ENCODE measurements at regions of chr10 and their contacts with region 1.

Region 1: DNA sequence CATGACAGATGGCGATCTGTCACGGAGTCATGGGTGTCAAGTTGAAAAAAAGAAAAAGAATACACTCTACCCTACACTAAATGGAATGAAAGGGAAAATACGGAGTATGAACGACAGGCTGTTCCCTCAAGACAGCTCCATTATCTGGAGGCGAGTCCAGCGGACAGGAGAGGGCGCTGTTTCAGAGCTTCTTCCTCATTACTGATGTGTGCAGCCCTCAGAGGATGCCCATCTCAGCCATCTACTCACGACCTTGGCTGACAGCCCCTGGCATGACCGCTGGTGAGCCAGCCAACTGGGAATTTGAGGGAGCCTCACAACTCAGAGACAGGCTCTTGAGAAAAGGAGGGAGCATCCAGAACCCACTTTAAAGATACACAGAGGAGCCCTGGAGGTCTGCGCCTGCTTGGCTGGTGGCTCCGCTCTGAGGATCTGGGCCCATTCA is 49.6 kb upstream of the SMNDC1 start:
- DNase-seq: peak; percentile 58
- CTCF ChIP-seq: peak; percentile 85

Region 2: DNA sequence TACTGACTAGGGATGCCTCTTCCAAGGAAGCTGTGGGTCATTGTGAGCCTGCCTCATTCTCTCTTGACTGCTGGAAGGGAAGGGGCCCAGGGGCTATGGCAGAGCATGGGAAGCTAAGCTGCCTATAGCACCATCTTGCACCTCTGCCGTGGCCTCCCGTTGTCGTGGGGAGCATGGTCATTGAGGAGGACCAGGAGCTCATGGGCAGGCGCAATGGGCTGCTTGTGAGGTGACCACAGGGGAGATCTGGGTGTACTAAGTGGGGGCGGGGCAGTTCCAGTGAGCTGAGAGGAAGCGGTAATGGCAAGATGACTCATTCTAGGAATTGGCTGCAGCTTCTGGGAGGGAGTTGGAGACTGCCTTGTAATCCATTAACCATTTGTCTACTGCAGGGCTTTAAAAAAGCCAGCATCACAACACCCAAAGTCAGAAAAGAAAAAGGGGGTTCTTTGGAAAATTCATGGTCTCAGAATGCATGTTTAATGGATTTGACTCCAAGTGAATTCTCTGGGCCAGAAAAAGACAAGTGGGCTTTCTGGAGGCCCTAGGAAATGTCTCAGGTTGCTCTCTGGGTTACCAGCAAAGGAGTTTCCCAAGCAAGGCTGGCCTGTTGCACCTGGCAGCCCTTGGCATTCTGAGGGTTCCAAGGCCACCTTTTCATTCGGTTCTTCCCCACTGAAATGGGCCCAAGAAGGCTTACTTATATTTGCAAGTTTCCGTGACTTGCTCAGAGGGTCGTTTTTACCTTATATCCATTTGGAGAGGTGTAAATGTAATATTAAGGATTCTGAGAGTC is 147.0 kb after region 1 on chr10:
- in situ Hi-C with region 1: loop called (anchors 10 kb)
- DNase-seq: peak; percentile 65
- CTCF ChIP-seq: no peak

Region 3: GRCh38 chr10:110547139-110547761 is 192.9 kb after region 1 on chr10:
- in situ Hi-C with region 1: loop called (anchors 10 kb)
- DNase-seq: peak; percentile 67
- CTCF ChIP-seq: peak; percentile 66